AG04449 (cell line): ENCODE measurements at regions of chr14 and their contacts with region 1.

Region 1: DNA sequence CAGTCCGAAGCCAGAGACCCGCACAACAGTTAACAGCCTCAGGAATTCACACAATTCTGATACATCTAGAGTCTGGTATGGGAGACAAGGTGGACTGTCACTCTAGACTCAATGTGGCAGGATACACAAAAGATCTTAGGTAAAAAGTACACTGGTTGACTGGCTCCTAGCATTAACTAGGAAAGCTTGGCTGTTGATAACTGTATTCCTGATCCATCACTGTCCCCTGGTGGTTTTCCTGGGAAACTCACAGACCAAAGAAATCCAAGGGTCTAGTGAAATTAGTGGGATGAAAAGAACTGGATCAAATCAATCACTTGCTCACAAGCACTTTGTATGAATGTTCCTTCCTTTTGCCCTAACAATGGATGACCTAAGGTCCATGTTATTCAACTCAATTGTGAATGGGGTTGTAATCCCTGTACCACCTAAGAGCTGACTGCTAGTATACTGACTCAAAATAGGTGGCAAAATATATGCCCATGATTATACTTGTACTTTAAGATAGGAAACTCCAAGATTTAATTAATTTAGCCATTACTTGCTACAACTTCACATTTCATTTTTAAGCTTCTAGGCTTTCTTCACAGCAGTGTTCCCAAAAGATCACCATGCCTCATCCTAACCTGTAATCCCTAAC is 14.0 kb downstream of the NPC2 start:
- DNase-seq: no peak
- H3K4me3 ChIP-seq: no peak overlapping the region
- CTCF ChIP-seq: peak; percentile 64

Region 2: DNA sequence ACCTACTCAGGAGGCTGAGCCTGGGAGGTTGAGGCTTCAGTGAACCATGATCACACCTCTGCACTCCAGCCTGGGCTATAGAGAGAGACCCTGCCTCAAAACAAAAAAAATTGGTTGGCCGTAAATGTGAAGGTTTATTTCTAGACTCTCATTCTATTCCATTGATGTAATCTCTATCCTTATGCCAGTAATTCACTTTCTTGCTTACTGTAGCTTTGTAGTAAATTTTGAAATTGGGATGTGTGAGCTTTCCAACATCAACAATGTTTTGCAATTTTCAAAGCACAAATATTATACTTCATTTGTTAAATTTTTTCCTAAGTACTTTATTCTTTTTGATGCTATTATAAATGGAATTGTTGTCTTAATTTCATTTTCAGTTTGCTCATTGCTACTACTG is 369.7 kb before region 1 on chr14:
- CTCF ChIA-PET with region 1: interaction called, 11 read pairs
- POLR2A ChIA-PET with region 1: no interaction called
- DNase-seq: no peak
- H3K4me3 ChIP-seq: no peak overlapping the region
- CTCF ChIP-seq: no peak

Region 3: GRCh38 chr14:74302634-74303577 is 176.2 kb before region 1 on chr14 and contains the start of gene ABCD4:
- CTCF ChIA-PET with region 1: interaction called, 12 read pairs
- POLR2A ChIA-PET with region 1: no interaction called
- DNase-seq: peak; percentile 36
- H3K4me3 ChIP-seq: peak within 1 kb of the TSS; percentile 81
- CTCF ChIP-seq: peak; percentile 49

Region 4: DNA sequence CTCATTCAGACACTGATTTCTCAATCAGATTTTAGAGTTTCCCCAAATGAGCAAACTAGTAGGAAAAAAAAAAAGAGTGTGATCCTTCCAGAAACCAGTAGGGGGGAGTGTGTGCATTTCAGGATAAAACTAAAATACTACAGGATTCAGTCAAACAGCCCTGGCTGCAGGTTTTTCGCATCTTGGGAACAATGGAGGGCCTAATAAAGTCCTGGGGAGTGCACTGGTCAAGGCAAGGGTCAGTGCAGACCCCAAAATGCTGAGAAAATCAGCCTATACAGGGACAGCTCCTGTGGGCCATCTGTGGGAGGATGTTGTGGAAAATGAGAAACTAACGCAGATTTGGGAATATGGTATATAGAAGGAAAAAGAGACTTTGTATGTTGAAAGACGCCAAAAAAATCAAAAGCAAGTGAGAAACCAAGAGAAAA is 154.2 kb before region 1 on chr14:
- CTCF ChIA-PET with region 1: interaction called, 53 read pairs
- POLR2A ChIA-PET with region 1: no interaction called
- DNase-seq: no peak
- H3K4me3 ChIP-seq: no peak overlapping the region
- CTCF ChIP-seq: peak; percentile 60

Region 5: GRCh38 chr14:74362361-74362915 is 116.7 kb before region 1 on chr14:
- CTCF ChIA-PET with region 1: interaction called, 131 read pairs
- POLR2A ChIA-PET with region 1: no interaction called
- DNase-seq: peak; percentile 12
- H3K4me3 ChIP-seq: no peak overlapping the region
- CTCF ChIP-seq: peak; percentile 93

Region 6: GRCh38 chr14:74459289-74459946 is 19.7 kb before region 1 on chr14:
- CTCF ChIA-PET with region 1: interaction called, 164 read pairs
- POLR2A ChIA-PET with region 1: no interaction called
- DNase-seq: no peak
- H3K4me3 ChIP-seq: no peak overlapping the region
- CTCF ChIP-seq: peak; percentile 85

Region 7: DNA sequence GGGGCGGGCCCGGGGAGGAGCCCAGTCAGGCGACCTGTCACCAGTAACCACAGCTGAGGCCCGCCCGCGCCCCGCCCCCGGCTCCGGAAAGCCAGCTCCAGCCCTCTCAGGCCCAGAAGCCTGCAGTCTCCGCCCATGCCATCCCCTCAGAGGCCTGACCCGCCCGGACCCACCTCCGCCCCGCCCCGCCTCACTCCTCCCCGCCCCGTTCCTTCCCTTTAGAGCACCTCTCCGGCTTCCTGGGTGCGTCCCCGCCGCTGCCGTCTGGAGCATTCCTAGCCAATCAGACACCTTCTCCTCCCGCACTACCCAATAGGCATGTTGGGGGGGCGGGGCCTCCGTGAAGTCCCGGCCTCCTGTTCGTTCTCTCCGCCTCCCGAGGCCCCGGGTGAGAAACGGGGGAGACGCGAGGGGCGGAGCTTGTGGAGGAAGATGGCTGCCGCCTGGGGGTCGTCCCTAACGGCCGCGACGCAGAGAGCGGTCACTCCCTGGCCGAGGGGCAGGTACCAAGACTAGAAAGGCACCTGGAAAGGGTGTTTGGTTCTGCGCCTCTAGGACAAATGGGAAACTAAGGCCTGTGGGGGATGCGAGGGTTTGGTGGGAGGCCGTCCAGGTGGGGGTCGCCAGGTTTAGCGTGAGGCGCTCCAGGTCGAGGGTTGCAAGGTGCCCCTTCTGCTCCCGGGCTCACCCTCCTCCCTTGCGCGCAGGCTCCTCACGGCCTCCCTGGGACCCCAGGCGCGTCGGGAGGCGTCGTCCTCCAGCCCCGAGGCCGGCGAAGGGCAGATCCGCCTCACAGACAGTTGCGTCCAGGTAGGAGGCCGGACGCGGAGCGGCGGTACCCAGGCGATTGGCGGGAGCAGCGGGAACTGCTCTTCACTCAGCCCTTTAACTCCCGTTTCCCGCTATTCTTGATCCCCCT is 14.5 kb after region 1 on chr14 and contains the start of gene ISCA2:
- CTCF ChIA-PET with region 1: interaction called, 22 read pairs
- POLR2A ChIA-PET with region 1: interaction called, 5 read pairs
- DNase-seq: peak; percentile 93
- H3K4me3 ChIP-seq: peak within 1 kb of the TSS; percentile 99
- CTCF ChIP-seq: no peak

Region 8: GRCh38 chr14:75278422-75279161 is 799.5 kb after region 1 on chr14 and contains the start of gene FOS:
- CTCF ChIA-PET with region 1: no interaction called
- POLR2A ChIA-PET with region 1: no interaction called
- DNase-seq: no peak
- H3K4me3 ChIP-seq: peak within 1 kb of the TSS; percentile 95
- CTCF ChIP-seq: no peak